Gastrocnemius medialis (tissue), 4 donors: ENCODE measurements at regions of chr4 and their contacts with region 1.

Region 1: GRCh38 chr4:1249148-1249730 is 309 bp upstream of the CTBP1 start:
- DNase-seq: peak; percentile 74 to 78
- ATAC-seq: peak; percentile 78 to 80
- H3K4me3 ChIP-seq: peak overlapping the region; percentile 68 to 85 (median 83)
- H3K27ac ChIP-seq: peak overlapping the region; percentile 94 to 97 (median 96)
- H3K4me1 ChIP-seq: peaks cover 45 to 73% of the 10 kb centered on the region in 2 donors
- H3K27me3 ChIP-seq: no peaks in the 10 kb centered on the region
- CTCF ChIP-seq: no peak
- POLR2A ChIP-seq: peak; percentile 23 to 62

Region 2: GRCh38 chr4:1011022-1011694 is 238.1 kb before region 1 on chr4 and contains the start of gene FGFRL1:
- in situ Hi-C with region 1: no loop called
- intact Hi-C with region 1: loop called (anchors 5 kb)
- DNase-seq: peak; percentile 87 to 88
- ATAC-seq: peak; percentile 62 to 63
- H3K4me3 ChIP-seq: peak within 1 kb of the TSS; percentile 63 to 97 (median 74)
- H3K27ac ChIP-seq: peak within 1 kb of the TSS; percentile 50 to 64 (median 62)
- H3K4me1 ChIP-seq: peaks cover 7 to 19% of the 10 kb centered on the region in 2 donors
- H3K27me3 ChIP-seq: peaks cover 19 to 23% (median 20%) of the 10 kb centered on the region in 3 donors
- CTCF ChIP-seq: no peak
- POLR2A ChIP-seq: peak in 1 of 2 donors; percentile 10
- total RNA-seq, gene FGFRL1: 10.4 to 32.4 (median 15.2) TPM

Region 3: GRCh38 chr4:1209821-1210210 is 39.4 kb before region 1 on chr4:
- in situ Hi-C with region 1: no loop called
- intact Hi-C with region 1: loop called (anchors 5 kb)
- DNase-seq: peak in 1 of 2 donors; percentile 57
- ATAC-seq: peak; percentile 35 to 41
- H3K4me3 ChIP-seq: no peak overlapping the region
- H3K27ac ChIP-seq: peak overlapping the region; percentile 14 to 76 (median 60)
- H3K4me1 ChIP-seq: peaks cover 37 to 44% of the 10 kb centered on the region in 2 donors
- H3K27me3 ChIP-seq: no peaks in the 10 kb centered on the region
- CTCF ChIP-seq: no peak
- POLR2A ChIP-seq: no peak

Region 4: GRCh38 chr4:1289207-1290164 is 40.2 kb after region 1 on chr4 and contains the start of gene MAEA:
- in situ Hi-C with region 1: loop called in 1 of 4 experiments (anchors 5 kb)
- intact Hi-C with region 1: loop called (anchors 1 kb)
- DNase-seq: peak; percentile 95 to 96
- ATAC-seq: peak; percentile 95 to 98
- H3K4me3 ChIP-seq: peak within 1 kb of the TSS; percentile 78 to 89 (median 84)
- H3K27ac ChIP-seq: peak within 1 kb of the TSS; percentile 84 to 93 (median 88)
- H3K4me1 ChIP-seq: peaks cover 38 to 44% of the 10 kb centered on the region in 2 donors
- H3K27me3 ChIP-seq: no peaks in the 10 kb centered on the region
- CTCF ChIP-seq: no peak
- POLR2A ChIP-seq: peak; percentile 74 to 88
- total RNA-seq, gene MAEA: 30.0 to 42.7 (median 34.3) TPM